ENCODE measurements at regions of chr19 and their contacts with region 1.

Region 1: GRCh38 chr19:48842789-48843162 is 6.5 kb upstream of the HSD17B14 start:
- DNase-seq: peak; percentile 31
- ATAC-seq: peak; percentile 54 to 56

Region 2: GRCh38 chr19:48646001-48646721 is 196.6 kb before region 1 on chr19 and contains the start of gene CA11:
- intact Hi-C with region 1: loop called in 1 of 2 experiments (anchors 10 kb)
- DNase-seq: peak; percentile 89
- ATAC-seq: peak; percentile 94
- total RNA-seq, gene CA11: 7.1 to 7.7 TPM

Measured in left cardiac atrium (tissue), 4 donors.